ENCODE measurements at regions of chr7 and their contacts with region 1.

Region 1: DNA sequence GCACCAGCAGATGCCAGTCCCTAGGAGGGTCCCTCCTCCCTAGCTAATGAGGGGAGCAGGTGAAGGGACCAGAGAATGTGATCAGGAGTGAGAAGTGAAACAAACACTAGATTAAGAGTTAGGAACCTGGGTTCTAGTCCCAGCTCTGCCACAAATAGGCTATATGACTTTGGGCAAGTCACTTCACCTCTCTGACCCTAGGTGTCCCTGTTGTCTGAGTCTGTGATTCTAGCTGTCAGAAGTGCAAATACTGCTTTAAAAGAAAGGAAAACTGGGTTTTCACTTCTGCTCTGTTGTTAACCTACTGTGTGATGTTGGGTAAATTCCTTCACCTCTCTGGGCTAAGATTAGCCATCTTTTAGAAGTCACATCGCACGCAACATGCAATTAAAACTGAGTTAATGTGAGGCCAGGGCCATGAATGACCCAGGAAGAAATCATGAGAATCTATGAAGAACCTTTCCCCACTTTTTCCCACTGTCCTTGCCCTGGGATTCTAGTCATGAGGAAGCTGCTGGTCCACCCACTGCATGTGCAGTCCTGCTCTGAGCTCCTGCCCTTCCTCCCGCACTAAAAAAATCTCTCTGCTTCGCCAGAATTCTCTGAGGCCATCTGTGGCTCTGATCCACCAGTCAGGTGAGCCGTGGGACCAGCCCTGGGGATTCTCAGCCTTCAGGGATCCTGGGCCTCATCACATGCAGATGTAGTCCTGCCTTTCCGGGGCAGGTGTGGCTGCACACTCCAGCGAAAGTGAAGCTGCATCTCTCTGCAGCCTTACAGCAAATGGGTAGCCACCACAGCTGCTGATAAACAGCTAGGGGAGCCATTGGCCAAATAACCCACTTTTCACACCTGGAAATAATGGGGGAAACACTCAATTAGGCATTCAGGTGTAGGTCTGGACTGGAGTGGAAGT is 181.7 kb downstream of the PLXNA4 start:
- DNase-seq: peak in 7 of 9 experiments; percentile 4 to 75 (median 39)
- ATAC-seq: peak; percentile 56
- H3K4me3 ChIP-seq: no peak overlapping the region
- H3K4me3 Mint-ChIP-seq: no peak overlapping the region
- H3K27ac ChIP-seq: no peak overlapping the region
- H3K27ac Mint-ChIP-seq: no peak overlapping the region
- H3K4me1 ChIP-seq: no peaks in the 10 kb centered on the region
- H3K4me1 Mint-ChIP-seq: peaks cover 4% of the 10 kb centered on the region
- H3K27me3 ChIP-seq: no peaks in the 10 kb centered on the region
- H3K27me3 Mint-ChIP-seq: no peaks in the 10 kb centered on the region
- CTCF ChIP-seq: peak; percentile 71

Region 2: DNA sequence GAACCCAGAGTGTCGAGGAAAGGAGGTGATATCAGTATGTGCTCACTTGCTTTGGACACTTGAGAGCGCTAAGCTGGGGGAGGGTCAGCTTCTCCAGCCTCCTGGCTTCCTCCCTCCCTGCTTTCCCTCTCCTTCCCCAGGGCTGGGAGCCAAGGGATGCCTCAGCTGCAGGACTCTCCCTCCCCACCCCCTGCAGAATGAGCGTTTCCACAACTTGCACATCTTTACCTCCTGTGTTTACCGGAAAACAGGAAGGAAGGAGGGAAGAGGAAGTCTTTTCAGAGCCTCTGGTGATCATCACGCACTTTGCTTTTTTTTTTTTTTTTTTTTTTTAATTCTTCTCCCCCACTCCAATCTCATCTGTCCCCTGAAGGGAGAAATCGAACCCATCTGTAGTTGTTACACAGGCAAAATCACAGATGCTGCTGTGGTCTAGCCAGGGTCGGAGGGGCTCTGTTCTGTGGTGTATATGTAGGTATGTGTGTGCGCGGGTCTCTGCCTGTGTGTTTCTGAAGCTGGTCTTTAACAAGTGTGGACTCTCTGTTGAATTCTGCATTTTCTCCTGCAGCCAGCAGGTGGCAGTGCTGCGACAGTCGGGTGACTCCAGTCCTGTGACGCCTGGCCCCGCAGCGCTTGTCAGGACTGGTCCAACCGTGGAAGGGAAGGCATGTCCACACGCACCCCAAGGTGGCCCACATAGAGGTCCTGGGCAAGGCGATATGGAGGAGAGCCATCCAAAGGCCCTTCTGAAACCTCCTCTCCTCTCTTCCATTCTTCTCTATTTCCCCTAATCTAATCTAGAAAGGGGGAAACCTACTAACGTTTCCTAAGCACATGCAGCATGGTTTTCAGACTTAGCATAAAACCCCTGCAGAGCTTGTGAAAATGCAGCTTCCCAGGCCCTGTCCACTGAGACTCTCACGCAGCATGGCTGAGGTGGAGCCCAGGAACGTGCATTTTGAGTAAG is 75.9 kb before region 1 on chr7:
- CTCF ChIA-PET with region 1: interaction called, 26 read pairs
- POLR2A ChIA-PET with region 1: no interaction called
- intact Hi-C with region 1: loop called in 1 of 2 experiments (anchors 1 kb)
- DNase-seq: peak; percentile 49 to 85 (median 76)
- ATAC-seq: peak; percentile 88
- H3K4me3 ChIP-seq: no peak overlapping the region
- H3K4me3 Mint-ChIP-seq: peak overlapping the region; percentile 42
- H3K27ac ChIP-seq: no peak overlapping the region
- H3K27ac Mint-ChIP-seq: no peak overlapping the region
- H3K4me1 ChIP-seq: peaks cover 9% of the 10 kb centered on the region
- H3K4me1 Mint-ChIP-seq: peaks cover 8% of the 10 kb centered on the region
- H3K27me3 ChIP-seq: peaks cover 9 to 12% of the 10 kb centered on the region in 2 experiments
- H3K27me3 Mint-ChIP-seq: peaks cover 31% of the 10 kb centered on the region
- CTCF ChIP-seq: peak; percentile 87

Region 3: GRCh38 chr7:132410385-132410784 is 15.8 kb after region 1 on chr7:
- CTCF ChIA-PET with region 1: interaction called, 15 read pairs
- POLR2A ChIA-PET with region 1: no interaction called
- intact Hi-C with region 1: no loop called
- DNase-seq: no peak
- ATAC-seq: no peak
- H3K4me3 ChIP-seq: no peak overlapping the region
- H3K4me3 Mint-ChIP-seq: no peak overlapping the region
- H3K27ac ChIP-seq: no peak overlapping the region
- H3K27ac Mint-ChIP-seq: no peak overlapping the region
- H3K4me1 ChIP-seq: no peaks in the 10 kb centered on the region
- H3K4me1 Mint-ChIP-seq: no peaks in the 10 kb centered on the region
- H3K27me3 ChIP-seq: no peaks in the 10 kb centered on the region
- H3K27me3 Mint-ChIP-seq: no peaks in the 10 kb centered on the region
- CTCF ChIP-seq: no peak

Region 4: GRCh38 chr7:132472463-132473120 is 78.1 kb after region 1 on chr7:
- CTCF ChIA-PET with region 1: no interaction called
- POLR2A ChIA-PET with region 1: interaction called, 3 read pairs
- intact Hi-C with region 1: loop called in 1 of 2 experiments (anchors 5 kb)
- DNase-seq: no peak
- ATAC-seq: no peak
- H3K4me3 ChIP-seq: no peak overlapping the region
- H3K4me3 Mint-ChIP-seq: no peak overlapping the region
- H3K27ac ChIP-seq: no peak overlapping the region
- H3K27ac Mint-ChIP-seq: no peak overlapping the region
- H3K4me1 ChIP-seq: peaks cover 21% of the 10 kb centered on the region
- H3K4me1 Mint-ChIP-seq: peaks cover 25% of the 10 kb centered on the region
- H3K27me3 ChIP-seq: peaks cover 0 to 2% of the 10 kb centered on the region in 2 experiments
- H3K27me3 Mint-ChIP-seq: no peaks in the 10 kb centered on the region
- CTCF ChIP-seq: no peak

Region 5: DNA sequence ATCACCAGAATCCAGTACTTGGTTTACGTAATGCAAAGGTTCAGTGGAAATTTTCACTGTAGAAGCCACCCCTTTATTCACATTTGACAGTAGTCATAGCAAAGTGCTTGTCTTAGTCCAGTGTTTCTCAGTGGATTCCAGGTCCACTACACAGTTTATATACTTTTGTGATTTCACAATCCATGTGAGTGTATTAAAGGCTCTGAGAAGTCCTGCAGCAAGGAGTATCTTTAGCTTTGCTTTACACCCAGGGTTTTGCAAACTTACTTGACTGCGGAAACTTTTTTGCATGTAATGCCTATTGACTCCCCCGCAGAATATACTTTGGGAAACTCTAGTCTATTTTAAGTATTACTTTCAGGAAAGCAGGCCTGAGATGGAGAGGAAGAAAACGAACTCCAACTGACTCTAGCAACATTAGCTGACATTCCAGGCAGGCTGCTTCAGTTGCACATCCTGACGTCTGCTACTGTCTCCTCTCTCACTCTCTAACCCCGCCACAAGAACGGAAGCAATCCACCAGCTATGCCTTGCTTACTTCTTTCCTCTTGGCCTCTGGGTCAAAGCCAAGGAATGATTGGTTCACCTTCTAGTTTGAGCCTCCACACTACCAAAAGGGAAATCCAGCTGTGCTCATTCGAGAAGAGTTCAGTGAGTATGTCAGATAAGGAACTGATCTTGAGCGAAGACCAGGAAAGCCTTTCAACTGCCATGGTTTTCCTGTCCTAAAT is 175.5 kb after region 1 on chr7:
- CTCF ChIA-PET with region 1: interaction called, 14 read pairs
- POLR2A ChIA-PET with region 1: no interaction called
- intact Hi-C with region 1: no loop called
- DNase-seq: no peak
- ATAC-seq: no peak
- H3K4me3 ChIP-seq: no peak overlapping the region
- H3K4me3 Mint-ChIP-seq: no peak overlapping the region
- H3K27ac ChIP-seq: no peak overlapping the region
- H3K27ac Mint-ChIP-seq: no peak overlapping the region
- H3K4me1 ChIP-seq: peaks cover 8% of the 10 kb centered on the region
- H3K4me1 Mint-ChIP-seq: peaks cover 11% of the 10 kb centered on the region
- H3K27me3 ChIP-seq: peaks cover 5 to 15% of the 10 kb centered on the region in 2 experiments
- H3K27me3 Mint-ChIP-seq: peaks cover 71% of the 10 kb centered on the region
- CTCF ChIP-seq: no peak

Region 6: DNA sequence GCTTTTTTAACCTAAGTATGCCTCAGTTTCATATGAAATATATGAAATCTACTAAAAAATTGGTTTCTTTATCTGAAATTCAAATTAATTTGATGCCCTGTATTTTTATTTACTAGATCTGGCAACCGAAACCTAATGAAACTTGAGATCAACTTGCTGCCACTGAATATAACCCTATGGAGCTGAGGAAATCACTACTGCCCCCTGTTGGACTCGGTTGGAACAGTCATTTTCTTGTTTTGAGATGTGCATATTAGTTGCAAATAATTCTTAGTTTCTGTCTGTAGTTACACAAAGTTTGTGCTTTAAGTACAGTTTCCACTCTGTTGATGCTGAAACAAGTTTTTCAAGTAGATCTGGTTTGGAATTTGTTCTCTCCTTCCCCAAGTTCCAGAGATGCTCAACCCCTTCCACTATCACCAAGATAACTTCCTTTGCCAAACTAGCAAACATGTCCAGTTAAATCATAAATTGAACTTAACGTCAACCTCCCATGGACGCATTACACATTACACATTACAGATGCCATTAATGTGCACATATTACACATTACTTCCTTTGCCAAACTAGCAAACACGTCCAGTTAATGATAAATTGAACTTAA is 836.2 kb after region 1 on chr7:
- CTCF ChIA-PET with region 1: no interaction called
- POLR2A ChIA-PET with region 1: no interaction called
- intact Hi-C with region 1: loop called in 1 of 2 experiments (anchors 2 kb)
- DNase-seq: peak in 5 of 9 experiments; percentile 7 to 62 (median 39)
- ATAC-seq: no peak
- H3K4me3 ChIP-seq: no peak overlapping the region
- H3K4me3 Mint-ChIP-seq: no peak overlapping the region
- H3K27ac ChIP-seq: no peak overlapping the region
- H3K27ac Mint-ChIP-seq: no peak overlapping the region
- H3K4me1 ChIP-seq: no peaks in the 10 kb centered on the region
- H3K4me1 Mint-ChIP-seq: no peaks in the 10 kb centered on the region
- H3K27me3 ChIP-seq: no peaks in the 10 kb centered on the region
- H3K27me3 Mint-ChIP-seq: peaks cover 5% of the 10 kb centered on the region
- CTCF ChIP-seq: peak; percentile 64

Measured in CD8-positive, alpha-beta T cell (primary cell).